ENCODE measurements at regions of chr14 and their contacts with region 1.

Region 1: DNA sequence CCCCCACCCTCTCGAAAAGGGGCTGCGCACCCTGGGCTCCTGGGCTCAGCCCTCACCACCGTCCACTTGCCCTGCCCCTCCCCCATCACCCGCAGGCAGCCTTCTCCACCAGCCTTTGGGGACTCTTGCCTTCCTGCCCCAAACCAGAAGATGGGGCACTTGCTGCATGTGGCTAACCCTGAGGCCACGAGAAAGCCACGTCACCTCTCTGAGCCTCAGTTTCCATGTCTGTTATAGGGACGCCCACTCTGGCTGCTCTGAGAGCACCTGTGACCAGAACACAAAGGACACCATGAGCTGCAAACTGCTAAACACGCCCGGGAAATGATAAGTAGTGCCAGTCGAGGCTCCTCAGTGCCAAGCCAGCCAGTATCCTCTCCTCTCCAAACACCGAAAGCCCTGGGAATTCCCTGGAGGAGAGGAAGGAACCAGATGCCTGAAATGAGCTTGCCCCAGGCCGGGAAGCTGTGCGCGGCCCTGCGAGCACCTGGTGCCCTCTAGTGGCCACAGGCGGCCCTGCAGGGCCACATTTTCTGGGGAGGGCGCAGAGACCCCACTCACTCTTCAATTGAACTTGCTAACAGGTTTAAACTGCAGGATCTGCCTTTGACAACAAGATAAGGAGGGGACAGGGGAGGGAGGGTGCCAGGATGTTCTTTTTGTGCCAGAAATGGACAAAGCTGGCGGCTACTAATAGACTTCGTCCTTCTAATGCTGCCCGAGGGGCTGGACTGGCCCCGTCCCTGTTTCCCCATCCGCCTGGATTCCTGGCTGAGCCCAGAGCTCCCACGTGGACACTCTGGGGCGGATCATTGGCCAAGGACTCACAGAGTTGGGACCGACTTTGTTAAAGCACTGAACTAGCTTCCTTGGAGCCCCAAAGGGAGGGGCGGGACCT is 10.2 kb upstream of the SERPINA9 start:
- DNase-seq: peak; percentile 68
- H3K4me3 Mint-ChIP-seq: no peak overlapping the region
- H3K27ac Mint-ChIP-seq: no peak overlapping the region
- H3K4me1 Mint-ChIP-seq: no peaks in the 10 kb centered on the region
- H3K27me3 Mint-ChIP-seq: no peaks in the 10 kb centered on the region
- CTCF ChIP-seq: peak; percentile 97

Region 2: DNA sequence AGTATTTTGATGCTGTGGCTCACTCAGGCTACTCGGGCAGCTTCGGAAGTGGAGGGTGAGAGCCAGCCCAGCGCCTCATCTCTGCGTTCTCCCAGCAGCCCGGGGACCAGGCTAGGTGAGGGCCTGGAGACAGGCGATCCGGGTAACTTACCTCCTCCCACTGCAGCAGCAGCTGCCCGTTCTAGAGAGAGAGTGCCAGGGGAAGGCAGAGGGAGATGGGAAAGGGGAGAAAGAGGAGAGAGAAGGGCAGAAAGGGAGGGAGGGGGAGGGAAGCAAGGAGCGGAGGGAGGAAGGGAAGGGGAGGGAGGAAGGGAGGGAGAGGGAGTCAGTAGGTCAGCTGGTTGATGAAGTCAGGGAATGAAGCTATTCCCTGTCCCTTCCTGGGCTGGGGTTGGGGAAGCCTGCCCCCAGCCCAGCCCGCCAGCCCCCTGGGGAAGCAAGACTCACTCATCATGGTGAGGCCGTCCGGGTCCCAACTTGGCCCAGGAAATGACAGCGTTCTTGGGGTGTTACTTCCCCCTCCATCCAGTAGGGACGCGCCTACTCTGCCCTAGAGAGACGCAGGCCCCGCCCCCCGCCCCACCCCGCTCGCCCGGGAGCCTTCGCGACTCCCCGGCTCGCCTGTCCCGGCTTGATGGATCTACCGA is 357.0 kb before region 1 on chr14 and contains the start of gene IFI27L2:
- CTCF ChIA-PET with region 1: interaction called, 38 read pairs
- POLR2A ChIA-PET with region 1: no interaction called
- intact Hi-C with region 1: loop called (anchors 1 kb)
- DNase-seq: peak; percentile 86
- H3K4me3 Mint-ChIP-seq: peak within 1 kb of the TSS; percentile 80
- H3K27ac Mint-ChIP-seq: peak within 1 kb of the TSS; percentile 43
- H3K4me1 Mint-ChIP-seq: peaks cover 9% of the 10 kb centered on the region
- H3K27me3 Mint-ChIP-seq: no peaks in the 10 kb centered on the region
- CTCF ChIP-seq: peak; percentile 26
- total RNA-seq, gene IFI27L2: 44.3 and 59.3 TPM in 2 replicates

Region 3: GRCh38 chr14:94180655-94181271 is 305.4 kb before region 1 on chr14:
- CTCF ChIA-PET with region 1: interaction called, 5 read pairs
- POLR2A ChIA-PET with region 1: no interaction called
- intact Hi-C with region 1: loop called (anchors 5 kb)
- DNase-seq: peak; percentile 55
- H3K4me3 Mint-ChIP-seq: peak overlapping the region; percentile 35
- H3K27ac Mint-ChIP-seq: peak overlapping the region; percentile 2
- H3K4me1 Mint-ChIP-seq: peaks cover 18% of the 10 kb centered on the region
- H3K27me3 Mint-ChIP-seq: no peaks in the 10 kb centered on the region
- CTCF ChIP-seq: peak; percentile 34

Region 4: GRCh38 chr14:94439453-94440057 is 46.6 kb before region 1 on chr14:
- CTCF ChIA-PET with region 1: interaction called, 39 read pairs
- POLR2A ChIA-PET with region 1: interaction called, 3 read pairs
- intact Hi-C with region 1: loop called (anchors 1 kb)
- DNase-seq: no peak
- H3K4me3 Mint-ChIP-seq: no peak overlapping the region
- H3K27ac Mint-ChIP-seq: no peak overlapping the region
- H3K4me1 Mint-ChIP-seq: no peaks in the 10 kb centered on the region
- H3K27me3 Mint-ChIP-seq: no peaks in the 10 kb centered on the region
- CTCF ChIP-seq: no peak

Region 5: GRCh38 chr14:94474581-94475031 is 11.6 kb before region 1 on chr14:
- CTCF ChIA-PET with region 1: interaction called, 18 read pairs
- POLR2A ChIA-PET with region 1: no interaction called
- intact Hi-C with region 1: no loop called
- DNase-seq: no peak
- H3K4me3 Mint-ChIP-seq: no peak overlapping the region
- H3K27ac Mint-ChIP-seq: no peak overlapping the region
- H3K4me1 Mint-ChIP-seq: no peaks in the 10 kb centered on the region
- H3K27me3 Mint-ChIP-seq: peaks cover 17% of the 10 kb centered on the region
- CTCF ChIP-seq: no peak

Region 6: DNA sequence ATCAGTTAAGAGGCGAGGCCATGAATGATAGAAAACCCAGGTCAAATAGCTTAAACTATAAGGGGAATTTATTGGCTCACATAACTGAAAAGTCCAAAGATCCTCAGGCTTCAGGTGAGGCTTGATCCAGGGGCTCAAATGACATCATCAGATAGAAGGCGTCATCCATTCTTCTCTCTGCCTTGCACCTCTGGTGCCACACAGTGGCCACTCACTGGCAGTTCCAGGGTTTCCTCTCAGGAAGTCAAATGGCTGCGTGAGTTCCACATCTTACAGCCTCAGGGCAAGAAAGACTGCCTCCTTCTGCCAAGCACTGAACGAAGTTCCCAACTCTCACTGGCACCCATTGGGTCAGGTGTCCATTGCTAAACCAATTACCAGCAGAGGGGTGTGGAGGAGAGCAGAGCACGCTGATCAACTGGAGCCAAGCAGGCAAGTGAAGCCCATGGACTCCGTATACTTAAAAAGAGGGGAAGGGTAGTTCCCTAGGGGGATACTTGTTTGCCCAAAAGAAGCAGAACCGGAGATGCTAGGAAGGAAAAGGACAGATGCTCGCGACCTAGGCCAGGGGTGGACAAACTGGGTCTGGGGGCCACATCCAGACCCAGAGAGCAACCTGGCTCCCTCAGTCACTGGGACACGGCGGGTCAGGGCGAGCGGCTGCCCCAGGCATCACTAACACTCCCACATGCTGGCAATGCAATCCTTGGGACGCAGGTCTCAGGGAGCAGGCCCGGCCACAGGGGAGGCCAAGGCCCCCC is 195.3 kb after region 1 on chr14:
- CTCF ChIA-PET with region 1: interaction called, 4 read pairs
- POLR2A ChIA-PET with region 1: no interaction called
- intact Hi-C with region 1: loop called (anchors 1 kb)
- DNase-seq: peak; percentile 83
- H3K4me3 Mint-ChIP-seq: no peak overlapping the region
- H3K27ac Mint-ChIP-seq: no peak overlapping the region
- H3K4me1 Mint-ChIP-seq: no peaks in the 10 kb centered on the region
- H3K27me3 Mint-ChIP-seq: no peaks in the 10 kb centered on the region
- CTCF ChIP-seq: peak; percentile 79

Measured in MCF 10A (cell line).